ENCODE measurements at regions of chr17 and their contacts with region 1.

Region 1: GRCh38 chr17:9959377-9959981 is 54.4 kb upstream of the RCVRN start:
- DNase-seq: peak; percentile 47 to 89
- H3K4me3 ChIP-seq: peak overlapping the region in 3 of 4 experiments; percentile 11 to 49 (median 29); a peak in 5 of 8 replicates
- H3K27ac ChIP-seq: no peak overlapping the region
- H3K4me1 ChIP-seq: peaks cover 10 to 26% (median 15%) of the 10 kb centered on the region in 4 experiments
- H3K27me3 ChIP-seq: peaks cover 0 to 2% (median 0%) of the 10 kb centered on the region in 4 experiments; a peak in 4 of 7 replicates
- CTCF ChIP-seq: peak; percentile 83 to 85 (median 84)
- EP300 ChIP-seq: no peak
- POLR2A ChIP-seq: no peak
- RAD21 ChIP-seq: peak; percentile 50 to 69

Region 2: GRCh38 chr17:9935408-9935807 is 24.1 kb before region 1 on chr17:
- CTCF ChIA-PET with region 1: interaction called, 130 read pairs
- POLR2A ChIA-PET with region 1: no interaction called
- DNase-seq: no peak
- H3K4me3 ChIP-seq: no peak overlapping the region
- H3K27ac ChIP-seq: no peak overlapping the region
- H3K4me1 ChIP-seq: peaks cover 0 to 5% (median 0%) of the 10 kb centered on the region in 4 experiments; a peak in 2 of 7 replicates
- H3K27me3 ChIP-seq: no peaks in the 10 kb centered on the region
- CTCF ChIP-seq: no peak
- EP300 ChIP-seq: no peak
- POLR2A ChIP-seq: no peak
- RAD21 ChIP-seq: no peak

Region 3: GRCh38 chr17:10001306-10001873 is 41.9 kb after region 1 on chr17:
- CTCF ChIA-PET with region 1: no interaction called
- POLR2A ChIA-PET with region 1: no interaction called
- DNase-seq: no peak
- H3K4me3 ChIP-seq: no peak overlapping the region
- H3K27ac ChIP-seq: no peak overlapping the region
- H3K4me1 ChIP-seq: no peaks in the 10 kb centered on the region; a peak in 1 of 7 replicates
- H3K27me3 ChIP-seq: no peaks in the 10 kb centered on the region
- CTCF ChIP-seq: no peak
- EP300 ChIP-seq: no peak
- POLR2A ChIP-seq: no peak
- RAD21 ChIP-seq: no peak

Region 4: DNA sequence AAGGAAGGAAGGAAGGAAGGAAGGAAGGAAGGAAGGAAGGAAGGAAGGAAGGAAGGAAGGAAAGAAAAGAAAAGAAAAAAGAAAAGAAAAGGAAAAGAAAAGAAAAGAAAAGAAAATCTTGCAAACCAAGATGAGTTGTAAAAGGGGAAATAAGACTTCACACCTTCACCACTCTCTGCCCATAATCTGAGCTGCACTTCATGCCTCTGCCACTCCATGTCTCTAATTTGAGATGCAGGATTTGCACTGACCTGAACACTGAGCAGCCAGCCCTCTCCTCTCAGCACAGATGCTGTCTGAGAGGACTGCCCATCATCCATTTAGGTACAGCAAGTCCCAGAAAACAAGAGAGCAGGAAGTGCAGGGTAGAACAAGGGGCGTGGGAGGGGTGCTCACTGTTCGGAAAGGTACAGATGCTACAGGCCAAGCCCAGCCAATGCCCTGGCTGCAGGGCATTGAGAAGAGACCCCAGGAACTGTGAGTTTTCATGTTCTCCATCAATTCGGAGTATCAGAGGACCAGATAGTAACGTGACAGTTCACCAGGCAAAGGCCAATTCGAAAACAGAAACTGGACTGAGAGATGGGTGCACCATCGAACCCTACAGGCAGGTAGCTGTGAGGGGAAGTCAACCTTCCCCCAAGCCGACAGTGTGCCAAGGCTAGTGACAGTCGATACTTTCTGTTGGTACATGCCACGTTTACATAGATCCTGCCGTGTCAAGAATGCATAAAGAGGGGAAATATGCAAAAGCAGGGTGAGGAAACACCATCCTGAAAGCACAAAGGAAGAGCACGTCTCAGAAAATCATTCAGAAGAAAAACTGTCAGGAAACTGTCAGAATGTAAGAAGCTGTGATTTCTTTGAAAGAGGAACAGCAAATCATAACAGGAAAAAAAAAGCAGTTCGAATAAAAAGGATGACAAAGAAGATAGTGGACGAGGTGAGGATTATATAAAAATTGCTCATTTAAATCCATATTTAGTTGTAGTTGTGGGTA is 87.6 kb after region 1 on chr17:
- CTCF ChIA-PET with region 1: no interaction called
- POLR2A ChIA-PET with region 1: no interaction called
- DNase-seq: no peak
- H3K4me3 ChIP-seq: no peak overlapping the region
- H3K27ac ChIP-seq: no peak overlapping the region
- H3K4me1 ChIP-seq: peaks cover 0 to 7% (median 2%) of the 10 kb centered on the region in 4 experiments; a peak in 1 of 7 replicates
- H3K27me3 ChIP-seq: no peaks in the 10 kb centered on the region
- CTCF ChIP-seq: no peak
- EP300 ChIP-seq: no peak
- POLR2A ChIP-seq: no peak
- RAD21 ChIP-seq: no peak

Region 5: GRCh38 chr17:10087081-10087754 is 127.7 kb after region 1 on chr17:
- CTCF ChIA-PET with region 1: no interaction called
- POLR2A ChIA-PET with region 1: no interaction called
- DNase-seq: no peak
- H3K4me3 ChIP-seq: no peak overlapping the region
- H3K27ac ChIP-seq: no peak overlapping the region
- H3K4me1 ChIP-seq: no peaks in the 10 kb centered on the region
- H3K27me3 ChIP-seq: no peaks in the 10 kb centered on the region
- CTCF ChIP-seq: no peak
- EP300 ChIP-seq: no peak
- POLR2A ChIP-seq: no peak
- RAD21 ChIP-seq: no peak

Region 6: DNA sequence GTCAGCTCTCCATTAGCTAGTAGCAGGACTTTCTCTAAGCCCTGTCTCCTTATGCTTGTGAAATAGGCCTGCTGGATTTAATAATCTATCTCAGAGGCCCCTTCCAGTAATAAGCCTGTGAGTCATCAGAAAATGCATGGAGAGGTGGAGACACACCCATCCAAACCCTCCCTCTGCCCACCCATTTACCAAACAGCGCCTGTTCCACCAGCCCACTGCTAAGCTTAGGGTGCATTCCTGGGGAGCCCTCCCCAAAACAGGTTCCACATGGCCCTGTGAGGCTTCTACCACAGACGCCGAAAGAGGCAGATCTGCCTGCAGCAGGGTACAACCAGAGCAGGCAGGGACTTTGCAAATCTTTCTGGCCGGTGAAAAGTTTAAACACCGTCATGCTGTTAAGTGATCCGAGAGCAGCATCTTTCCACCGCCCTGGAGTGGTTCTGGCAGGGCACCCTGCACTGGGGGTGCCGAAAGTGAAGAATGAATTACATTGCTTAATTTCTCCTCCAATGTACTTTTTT is 139.6 kb after region 1 on chr17:
- CTCF ChIA-PET with region 1: no interaction called
- POLR2A ChIA-PET with region 1: no interaction called
- DNase-seq: no peak
- H3K4me3 ChIP-seq: no peak overlapping the region
- H3K27ac ChIP-seq: no peak overlapping the region
- H3K4me1 ChIP-seq: no peaks in the 10 kb centered on the region
- H3K27me3 ChIP-seq: no peaks in the 10 kb centered on the region
- CTCF ChIP-seq: no peak
- EP300 ChIP-seq: no peak
- POLR2A ChIP-seq: no peak
- RAD21 ChIP-seq: no peak

Measured in H1 (cell line).